ENCODE measurements at regions of chrX and their contacts with region 1.

Region 1: DNA sequence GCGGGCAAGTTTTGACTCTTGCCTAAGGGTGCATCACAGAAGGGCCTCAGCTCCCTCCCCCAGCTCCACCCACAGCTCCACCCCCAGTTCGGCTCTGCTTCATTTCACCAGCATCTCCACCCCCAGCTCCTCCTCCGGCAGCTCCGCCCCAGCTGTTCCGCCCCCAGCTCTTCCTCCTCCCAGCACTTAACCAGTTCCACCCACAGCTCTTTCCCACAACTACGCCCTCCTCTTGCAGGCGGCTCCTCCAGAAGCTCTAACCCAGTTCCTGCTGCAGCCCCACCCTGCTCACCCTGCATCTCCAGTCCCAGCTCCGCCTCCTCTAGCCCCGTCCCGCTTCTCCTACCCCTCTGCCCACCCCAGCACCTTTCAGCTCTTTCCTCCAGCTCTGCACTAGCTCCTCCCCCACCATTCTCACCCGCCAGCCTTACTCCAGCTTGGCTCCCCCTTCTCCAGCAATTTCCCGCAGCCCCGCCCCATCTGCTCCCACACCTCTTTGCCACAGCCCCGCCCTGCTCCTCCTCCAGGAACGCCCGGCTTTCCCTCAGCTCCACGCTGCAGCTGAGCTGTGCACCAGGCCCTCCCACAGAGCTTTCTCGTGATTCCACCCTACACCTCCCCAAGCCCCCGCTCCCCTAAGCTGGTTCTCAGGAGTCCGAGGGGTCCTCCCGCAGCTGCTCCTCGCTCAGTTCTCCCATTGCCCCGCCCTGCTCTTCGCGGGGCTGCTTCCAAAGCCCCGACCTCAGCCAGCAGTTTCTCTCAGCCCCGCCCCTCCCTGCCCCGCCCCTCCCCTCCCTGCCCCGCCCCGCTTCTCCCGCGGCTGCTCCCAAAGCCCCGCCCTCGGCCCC is 1.3 kb upstream of the EOLA1 start:
- DNase-seq: peak; percentile 62 to 97 (median 74)

Region 2: DNA sequence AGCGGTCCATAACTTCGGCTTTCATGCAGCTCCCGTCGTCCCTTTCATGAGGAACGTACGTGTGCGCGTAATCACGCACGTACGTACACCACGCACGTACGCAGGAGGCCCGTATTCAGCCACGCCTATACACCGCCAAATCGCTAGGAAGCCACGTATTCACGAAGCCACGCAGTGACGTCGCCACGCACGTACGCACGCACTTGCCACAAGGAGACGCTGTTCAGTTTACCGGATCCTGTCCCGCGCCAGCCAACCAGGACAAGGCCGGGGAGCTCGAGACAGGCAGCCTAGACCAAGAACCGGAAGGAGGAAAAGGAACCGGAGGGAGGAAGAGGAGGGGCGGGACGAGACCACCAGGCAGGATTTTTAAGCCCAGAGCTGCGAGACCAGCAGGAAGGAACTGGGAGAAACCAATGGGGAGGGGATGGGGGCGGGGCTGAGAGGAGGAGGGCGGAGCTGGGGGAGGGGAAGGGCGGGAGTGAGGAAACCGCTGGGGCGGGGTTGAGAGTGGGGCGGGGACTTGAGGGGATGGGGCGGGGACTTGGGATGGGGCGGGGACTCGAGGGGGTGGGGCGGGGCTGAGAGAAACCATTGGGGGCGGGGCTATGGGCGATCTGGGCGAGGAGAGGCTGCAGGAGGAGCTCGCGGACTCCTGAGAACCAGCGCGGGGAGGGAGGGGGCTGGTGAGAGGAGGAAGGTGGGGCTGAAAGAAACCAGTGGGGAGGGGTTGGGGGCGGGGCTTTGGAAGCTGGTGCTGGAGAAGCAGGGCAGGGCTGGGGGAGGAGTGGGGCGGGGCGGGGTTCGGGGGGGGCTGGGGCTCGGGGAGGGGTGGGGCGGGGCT is 399.1 kb after region 1 on chrX and contains the start of gene EOLA2:
- intact Hi-C with region 1: loop called (anchors 10 kb)
- DNase-seq: peak; percentile 85 to 99 (median 92)